ENCODE measurements at regions of chr1 and their contacts with region 1.

Region 1: DNA sequence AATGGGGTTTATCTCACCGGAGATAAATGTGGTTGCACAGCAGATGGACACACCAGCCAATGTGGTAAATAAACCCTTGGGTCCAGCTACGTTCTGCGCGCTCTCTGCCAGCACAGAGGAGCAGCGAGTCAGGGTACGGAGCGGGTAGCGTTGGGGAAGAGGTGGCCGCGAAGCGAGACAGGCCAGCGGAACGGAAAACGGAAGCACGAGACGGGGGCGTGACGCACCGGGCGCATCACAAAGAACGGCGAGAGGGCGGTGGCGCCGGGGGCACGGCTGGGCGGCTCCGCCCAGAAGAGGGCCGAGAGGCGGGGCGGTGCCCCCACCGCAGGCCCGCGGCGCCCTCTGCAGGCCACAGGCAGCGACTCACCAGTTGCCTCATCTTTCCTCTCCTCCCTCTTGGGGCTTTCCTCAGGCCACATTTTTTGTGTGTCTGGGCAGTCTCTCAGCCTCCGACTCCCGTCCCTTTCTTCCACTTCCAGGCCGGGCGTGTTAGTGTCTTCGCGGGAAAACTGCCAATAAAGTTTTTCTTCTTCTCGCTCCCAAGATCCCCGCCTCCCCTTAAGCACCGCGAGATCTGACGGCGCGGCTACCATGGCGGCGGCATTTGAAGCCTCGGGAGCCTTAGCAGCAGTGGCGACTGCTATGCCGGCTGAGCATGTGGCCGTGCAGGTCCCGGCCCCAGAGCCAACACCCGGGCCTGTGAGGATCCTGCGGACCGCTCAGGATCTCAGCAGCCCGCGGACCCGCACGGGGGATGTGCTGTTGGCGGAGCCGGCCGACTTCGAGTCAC is at the start of gene DDX20:
- DNase-seq: peak; percentile 91
- H3K4me3 ChIP-seq: peak within 1 kb of the TSS; percentile 73 to 82
- H3K27ac ChIP-seq: peak within 1 kb of the TSS; percentile 88 to 93
- H3K4me1 ChIP-seq: no peaks in the 10 kb centered on the region
- H3K27me3 ChIP-seq: no peaks in the 10 kb centered on the region
- CTCF ChIP-seq: peak; percentile 88 to 99 (median 98)
- POLR2A ChIP-seq: peak; percentile 49
- total RNA-seq, gene DDX20: 15.9 to 33.9 TPM

Region 2: DNA sequence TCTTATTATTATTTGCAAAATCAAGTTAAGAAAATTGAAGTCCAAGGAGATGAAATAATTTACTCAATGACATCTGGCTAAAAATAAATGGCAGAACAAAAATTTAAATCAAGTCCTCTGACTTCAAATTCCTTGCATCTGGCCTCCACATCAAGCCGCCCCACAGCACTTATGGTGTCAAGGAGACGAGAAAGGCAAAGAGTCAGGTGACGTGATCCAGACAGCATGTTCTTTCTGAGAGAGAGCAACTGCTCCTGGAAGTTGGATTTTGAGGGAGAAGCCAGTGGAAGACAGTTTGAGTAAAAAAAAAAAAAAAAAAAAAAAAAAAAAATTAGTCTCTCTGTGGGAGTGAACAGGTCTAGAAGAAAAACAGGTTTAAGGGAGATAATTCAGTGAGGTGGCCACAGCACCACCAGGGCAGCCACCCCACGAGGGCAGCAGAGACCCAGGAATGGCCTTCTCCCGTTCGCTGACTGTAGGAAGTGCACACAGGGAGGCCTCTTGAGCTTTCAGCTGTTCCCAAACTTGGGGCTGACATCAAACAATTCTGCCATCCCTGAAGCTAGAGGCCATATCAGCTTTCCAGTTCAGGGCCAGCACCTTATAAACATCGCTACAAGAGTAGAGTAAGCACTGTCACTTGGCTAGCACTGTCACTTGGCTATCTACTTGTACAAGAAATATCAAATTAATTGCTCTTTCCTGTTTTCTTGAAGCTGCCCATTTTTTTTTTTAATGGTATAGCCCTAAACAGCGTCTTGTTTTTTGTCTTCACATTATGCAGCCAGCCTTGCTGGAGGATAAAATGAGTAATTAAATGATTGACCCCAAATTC is 273.9 kb before region 1 on chr1:
- intact Hi-C with region 1: loop called (anchors 5 kb)
- DNase-seq: peak; percentile 62
- H3K4me3 ChIP-seq: no peak overlapping the region
- H3K27ac ChIP-seq: no peak overlapping the region
- H3K4me1 ChIP-seq: no peaks in the 10 kb centered on the region
- H3K27me3 ChIP-seq: no peaks in the 10 kb centered on the region
- CTCF ChIP-seq: peak in 3 of 4 experiments; percentile 42 to 86 (median 80)
- POLR2A ChIP-seq: no peak

Region 3: DNA sequence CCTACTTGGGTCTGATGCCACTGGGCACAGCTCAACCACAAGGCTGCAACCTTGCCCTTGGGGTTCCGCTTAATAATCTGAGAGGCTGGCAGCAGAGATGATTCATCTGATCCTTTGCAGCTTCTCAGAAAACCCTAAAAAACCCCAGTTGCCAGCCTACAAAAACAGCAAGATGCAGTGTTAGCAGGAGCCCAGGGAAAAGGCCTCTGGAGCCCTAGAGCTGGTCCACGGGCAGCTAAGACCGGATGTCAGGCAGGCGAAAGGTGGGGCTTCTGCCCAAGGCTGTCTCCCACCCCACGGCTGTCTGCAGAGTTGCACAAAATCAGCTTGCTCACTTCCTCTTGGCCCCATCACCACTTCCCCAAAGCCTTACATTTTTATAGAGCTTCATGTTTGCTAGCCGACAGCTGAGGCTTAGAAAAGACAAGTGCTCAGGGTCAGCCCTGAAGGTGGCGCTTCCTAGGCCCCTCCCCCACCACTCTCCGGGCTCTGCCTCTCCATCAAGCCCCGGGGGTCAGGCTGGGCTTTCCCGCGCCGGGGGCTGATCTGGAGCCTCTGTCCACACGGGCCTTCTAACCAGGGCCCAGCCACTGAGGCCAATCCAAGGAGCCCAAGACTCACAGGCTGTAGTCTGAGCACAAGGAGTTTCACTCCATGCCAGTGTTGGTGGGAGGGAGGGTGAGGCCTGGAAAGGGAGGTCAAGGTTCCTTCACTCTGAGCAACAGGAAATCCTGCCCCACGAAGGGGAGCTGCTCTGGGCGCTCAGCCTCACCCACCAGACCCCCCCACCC is 247.9 kb before region 1 on chr1:
- intact Hi-C with region 1: loop called (anchors 5 kb)
- DNase-seq: peak; percentile 35
- H3K4me3 ChIP-seq: no peak overlapping the region
- H3K27ac ChIP-seq: peak overlapping the region; percentile 84 to 90
- H3K4me1 ChIP-seq: peaks cover 9% of the 10 kb centered on the region
- H3K27me3 ChIP-seq: no peaks in the 10 kb centered on the region
- CTCF ChIP-seq: peak in 1 of 4 experiments; percentile 4
- POLR2A ChIP-seq: no peak

Region 4: GRCh38 chr1:111719674-111720132 is 35.8 kb before region 1 on chr1:
- intact Hi-C with region 1: loop called (anchors 5 kb)
- DNase-seq: no peak
- H3K4me3 ChIP-seq: no peak overlapping the region
- H3K27ac ChIP-seq: no peak overlapping the region
- H3K4me1 ChIP-seq: no peaks in the 10 kb centered on the region
- H3K27me3 ChIP-seq: no peaks in the 10 kb centered on the region
- CTCF ChIP-seq: no peak
- POLR2A ChIP-seq: no peak

Region 5: DNA sequence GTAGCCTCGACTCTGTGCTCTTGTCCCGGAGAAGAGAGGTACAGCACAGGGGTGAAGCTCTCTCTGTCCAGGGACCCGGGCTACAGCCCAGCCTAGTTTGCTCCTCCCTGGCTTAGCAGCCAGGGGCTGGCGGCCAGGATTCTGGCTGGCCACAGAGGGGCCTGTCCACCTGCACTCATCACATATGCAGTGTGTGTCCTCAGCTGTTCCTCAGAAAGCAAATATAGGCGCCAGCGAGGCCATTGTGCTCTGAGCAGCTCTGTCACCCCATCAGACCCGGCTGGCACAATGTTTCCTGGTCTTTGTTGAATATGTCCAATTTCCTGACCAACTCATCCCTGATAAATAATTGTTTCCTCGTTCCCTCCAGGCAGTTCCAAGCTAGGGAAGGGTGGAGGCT is 205.5 kb after region 1 on chr1:
- intact Hi-C with region 1: no loop called
- DNase-seq: no peak
- H3K4me3 ChIP-seq: no peak overlapping the region
- H3K27ac ChIP-seq: no peak overlapping the region
- H3K4me1 ChIP-seq: no peaks in the 10 kb centered on the region
- H3K27me3 ChIP-seq: no peaks in the 10 kb centered on the region
- CTCF ChIP-seq: no peak
- POLR2A ChIP-seq: no peak